ENCODE measurements at regions of chr9 and their contacts with region 1.

Region 1: GRCh38 chr9:96418074-96418809 is at the start of gene ZNF367:
- DNase-seq: peak; percentile 99
- H3K4me3 ChIP-seq: peak within 1 kb of the TSS; percentile 62 to 95 (median 83)
- H3K27ac ChIP-seq: peak within 1 kb of the TSS; percentile 90
- H3K4me1 ChIP-seq: peaks cover 18% of the 10 kb centered on the region
- H3K27me3 ChIP-seq: no peaks in the 10 kb centered on the region
- CTCF ChIP-seq: no peak
- total RNA-seq, gene ZNF367: 1.5 to 7.9 TPM

Region 2: DNA sequence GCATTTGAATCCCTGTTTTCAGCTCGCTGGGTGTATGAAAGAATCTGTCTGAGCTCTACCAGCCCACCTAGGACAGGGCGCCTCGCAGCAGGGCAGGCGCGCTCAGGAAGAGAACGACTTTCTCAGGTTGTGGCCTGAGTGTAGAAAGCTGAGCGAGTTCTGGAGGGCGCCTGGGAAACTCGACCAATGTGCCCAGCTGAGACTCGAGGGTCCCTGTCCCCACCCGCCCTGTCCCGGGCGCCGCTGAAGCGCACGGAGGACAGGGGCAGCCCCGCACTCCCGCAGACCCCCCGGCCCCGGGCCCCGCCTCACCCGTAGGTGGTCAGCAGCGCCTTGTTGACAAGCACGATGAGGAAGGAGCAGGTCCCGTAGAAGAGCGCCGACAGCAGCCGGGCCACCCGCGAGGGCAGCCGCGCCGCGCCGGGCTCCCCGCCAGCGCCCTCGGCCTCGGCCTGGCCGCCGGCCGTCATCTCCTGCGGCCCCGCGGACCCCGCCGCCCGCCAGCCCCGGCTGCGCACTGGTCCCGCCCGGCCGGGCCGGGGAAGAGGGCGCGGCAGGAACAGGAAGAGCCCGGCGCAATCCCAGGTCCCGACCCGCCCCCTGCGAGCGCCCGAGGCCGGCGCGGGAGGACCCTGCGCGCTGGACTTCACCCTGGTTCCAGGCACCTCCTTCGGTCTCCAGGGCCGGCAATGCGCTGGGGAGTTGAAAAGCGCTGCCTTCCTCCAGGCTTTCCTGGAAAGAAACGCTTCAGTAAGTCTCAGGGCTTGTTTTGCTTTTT is 34.9 kb before region 1 on chr9 and contains the start of gene SLC35D2:
- CTCF ChIA-PET with region 1: no interaction called
- dilution Hi-C with region 1: no loop called
- in situ Hi-C with region 1: no loop called
- intact Hi-C with region 1: loop called (anchors 2 kb)
- DNase-seq: peak; percentile 56
- H3K4me3 ChIP-seq: peak within 1 kb of the TSS; percentile 66 to 81 (median 72)
- H3K27ac ChIP-seq: peak within 1 kb of the TSS; percentile 25
- H3K4me1 ChIP-seq: peaks cover 4% of the 10 kb centered on the region
- H3K27me3 ChIP-seq: no peaks in the 10 kb centered on the region
- CTCF ChIP-seq: no peak
- total RNA-seq, gene SLC35D2: 16.7 to 20.9 TPM

Region 3: GRCh38 chr9:96654443-96655197 is 236.4 kb after region 1 on chr9:
- CTCF ChIA-PET with region 1: no interaction called
- dilution Hi-C with region 1: no loop called
- in situ Hi-C with region 1: no loop called
- intact Hi-C with region 1: loop called (anchors 1 kb)
- DNase-seq: peak; percentile 79
- H3K4me3 ChIP-seq: peak overlapping the region; percentile 48 to 74 (median 66)
- H3K27ac ChIP-seq: peak overlapping the region; percentile 89
- H3K4me1 ChIP-seq: peaks cover 8% of the 10 kb centered on the region
- H3K27me3 ChIP-seq: no peaks in the 10 kb centered on the region
- CTCF ChIP-seq: peak in 1 of 2 donors; percentile 21